Adrenal gland (tissue), 19 donors: ENCODE measurements at regions of chr3 and their contacts with region 1.

Region 1: GRCh38 chr3:196684548-196685407 is 27.3 kb downstream of the CEP19 start:
- DNase-seq: peak; percentile 42 to 82 (median 61)
- H3K4me3 ChIP-seq: no peak overlapping the region
- H3K27ac ChIP-seq: no peak overlapping the region
- H3K4me1 ChIP-seq: peaks cover 0 to 11% of the 10 kb centered on the region in 2 donors
- H3K27me3 ChIP-seq: no peaks in the 10 kb centered on the region
- CTCF ChIP-seq: peak; percentile 83 to 92 (median 89)
- POLR2A ChIP-seq: no peak

Region 2: DNA sequence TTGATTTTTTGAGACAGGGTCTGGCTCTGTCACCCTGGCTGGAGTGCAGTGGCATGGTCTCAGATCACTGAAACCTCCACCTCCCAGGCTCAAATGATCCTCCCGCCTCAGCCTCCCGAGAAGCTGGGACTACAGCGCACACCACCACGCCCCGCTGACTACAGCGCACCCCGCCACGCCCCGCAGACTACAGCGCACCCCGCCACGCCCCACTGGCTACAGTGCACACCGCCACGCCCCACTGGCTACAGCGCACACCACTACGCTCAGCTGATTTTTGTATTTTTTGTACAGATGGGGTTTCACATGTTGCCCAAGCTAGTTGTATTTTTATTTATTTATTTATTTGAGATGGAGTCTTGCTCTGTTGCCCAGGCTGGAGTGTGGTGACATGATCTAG is 432.9 kb before region 1 on chr3:
- intact Hi-C with region 1: loop called in 1 of 2 experiments (anchors 10 kb)
- DNase-seq: no peak
- H3K4me3 ChIP-seq: no peak overlapping the region
- H3K27ac ChIP-seq: no peak overlapping the region
- H3K4me1 ChIP-seq: no peaks in the 10 kb centered on the region
- H3K27me3 ChIP-seq: no peaks in the 10 kb centered on the region
- CTCF ChIP-seq: no peak
- POLR2A ChIP-seq: no peak

Region 3: GRCh38 chr3:196537319-196537984 is 147.3 kb before region 1 on chr3:
- intact Hi-C with region 1: loop called in 1 of 2 experiments (anchors 10 kb)
- DNase-seq: peak in 5 of 7 donors; percentile 38 to 64 (median 51)
- H3K4me3 ChIP-seq: no peak overlapping the region
- H3K27ac ChIP-seq: no peak overlapping the region
- H3K4me1 ChIP-seq: no peaks in the 10 kb centered on the region
- H3K27me3 ChIP-seq: no peaks in the 10 kb centered on the region
- CTCF ChIP-seq: peak; percentile 48 to 73 (median 62)
- POLR2A ChIP-seq: no peak

Region 4: GRCh38 chr3:196609343-196609775 is 75.4 kb before region 1 on chr3:
- intact Hi-C with region 1: loop called (anchors 5 to 10 kb)
- DNase-seq: peak; percentile 81 to 89 (median 87)
- H3K4me3 ChIP-seq: no peak overlapping the region
- H3K27ac ChIP-seq: no peak overlapping the region
- H3K4me1 ChIP-seq: no peaks in the 10 kb centered on the region
- H3K27me3 ChIP-seq: no peaks in the 10 kb centered on the region
- CTCF ChIP-seq: peak; percentile 49 to 80 (median 74)
- POLR2A ChIP-seq: no peak